ENCODE measurements at regions of chr5 and their contacts with region 1.

Region 1: GRCh38 chr5:154754460-154755360 is 467 bp upstream of the LARP1 start:
- DNase-seq: peak; percentile 100
- H3K4me3 Mint-ChIP-seq: peak overlapping the region; percentile 92
- H3K27ac Mint-ChIP-seq: peak overlapping the region; percentile 99
- H3K4me1 Mint-ChIP-seq: peaks cover 38% of the 10 kb centered on the region
- H3K27me3 Mint-ChIP-seq: no peaks in the 10 kb centered on the region

Region 2: GRCh38 chr5:154038707-154039457 is 715.8 kb before region 1 on chr5 and contains the starts of genes FAM114A2 and MFAP3:
- intact Hi-C with region 1: loop called (anchors 5 kb)
- DNase-seq: peak; percentile 97
- H3K4me3 Mint-ChIP-seq: peak within 1 kb of the TSS; percentile 96
- H3K27ac Mint-ChIP-seq: peak within 1 kb of the TSS; percentile 96
- H3K4me1 Mint-ChIP-seq: peaks cover 31% of the 10 kb centered on the region
- H3K27me3 Mint-ChIP-seq: no peaks in the 10 kb centered on the region
- total RNA-seq, gene FAM114A2: 23.6 and 27.3 TPM in 2 replicates
- total RNA-seq, gene MFAP3: 23.1 and 26.4 TPM in 2 replicates

Region 3: GRCh38 chr5:154445422-154446182 is 309.1 kb before region 1 on chr5 and contains the start of gene SAP30L:
- intact Hi-C with region 1: loop called (anchors 2 kb)
- DNase-seq: peak; percentile 99
- H3K4me3 Mint-ChIP-seq: peak within 1 kb of the TSS; percentile 99
- H3K27ac Mint-ChIP-seq: peak within 1 kb of the TSS; percentile 96
- H3K4me1 Mint-ChIP-seq: peaks cover 42% of the 10 kb centered on the region
- H3K27me3 Mint-ChIP-seq: no peaks in the 10 kb centered on the region
- total RNA-seq, gene SAP30L: 31.4 and 37.7 TPM in 2 replicates

Region 4: GRCh38 chr5:154683101-154683880 is 71.4 kb before region 1 on chr5:
- intact Hi-C with region 1: loop called (anchors 1 kb)
- DNase-seq: no peak
- H3K4me3 Mint-ChIP-seq: peak overlapping the region; percentile 79
- H3K27ac Mint-ChIP-seq: no peak overlapping the region
- H3K4me1 Mint-ChIP-seq: peaks cover 4% of the 10 kb centered on the region
- H3K27me3 Mint-ChIP-seq: peaks cover 20% of the 10 kb centered on the region

Region 5: GRCh38 chr5:154811653-154812365 is 57.1 kb after region 1 on chr5:
- intact Hi-C with region 1: loop called (anchors 2 kb)
- DNase-seq: peak; percentile 87
- H3K4me3 Mint-ChIP-seq: no peak overlapping the region
- H3K27ac Mint-ChIP-seq: no peak overlapping the region
- H3K4me1 Mint-ChIP-seq: peaks cover 16% of the 10 kb centered on the region
- H3K27me3 Mint-ChIP-seq: no peaks in the 10 kb centered on the region

Region 6: GRCh38 chr5:154940772-154941620 is 186.3 kb after region 1 on chr5 and contains the start of gene MRPL22:
- intact Hi-C with region 1: loop called (anchors 1 kb)
- DNase-seq: peak; percentile 99
- H3K4me3 Mint-ChIP-seq: peak within 1 kb of the TSS; percentile 98
- H3K27ac Mint-ChIP-seq: peak within 1 kb of the TSS; percentile 94
- H3K4me1 Mint-ChIP-seq: peaks cover 24% of the 10 kb centered on the region
- H3K27me3 Mint-ChIP-seq: no peaks in the 10 kb centered on the region
- total RNA-seq, gene MRPL22: 83.8 and 89.6 TPM in 2 replicates

Measured in activated CD4-positive, alpha-beta T cell treated with anti-CD3 and anti-CD28 coated beads, Interleukin-2, amount 10 ng/mL, durations not matched to agents 24 days and 14 days (primary cell).